Prostate gland (tissue), 2 donors: ENCODE measurements at regions of chrX and their contacts with region 1.

Region 1: GRCh38 chrX:15349046-15349445 is 13.7 kb upstream of the PIGA start:
- DNase-seq: peak; percentile 63
- H3K4me3 ChIP-seq: no peak overlapping the region
- H3K27ac ChIP-seq: no peak overlapping the region
- H3K4me1 ChIP-seq: no peaks in the 10 kb centered on the region
- H3K27me3 ChIP-seq: no peaks in the 10 kb centered on the region
- CTCF ChIP-seq: peak in 3 of 4 experiments; percentile 34 to 67 (median 48)
- POLR2A ChIP-seq: no peak

Region 2: DNA sequence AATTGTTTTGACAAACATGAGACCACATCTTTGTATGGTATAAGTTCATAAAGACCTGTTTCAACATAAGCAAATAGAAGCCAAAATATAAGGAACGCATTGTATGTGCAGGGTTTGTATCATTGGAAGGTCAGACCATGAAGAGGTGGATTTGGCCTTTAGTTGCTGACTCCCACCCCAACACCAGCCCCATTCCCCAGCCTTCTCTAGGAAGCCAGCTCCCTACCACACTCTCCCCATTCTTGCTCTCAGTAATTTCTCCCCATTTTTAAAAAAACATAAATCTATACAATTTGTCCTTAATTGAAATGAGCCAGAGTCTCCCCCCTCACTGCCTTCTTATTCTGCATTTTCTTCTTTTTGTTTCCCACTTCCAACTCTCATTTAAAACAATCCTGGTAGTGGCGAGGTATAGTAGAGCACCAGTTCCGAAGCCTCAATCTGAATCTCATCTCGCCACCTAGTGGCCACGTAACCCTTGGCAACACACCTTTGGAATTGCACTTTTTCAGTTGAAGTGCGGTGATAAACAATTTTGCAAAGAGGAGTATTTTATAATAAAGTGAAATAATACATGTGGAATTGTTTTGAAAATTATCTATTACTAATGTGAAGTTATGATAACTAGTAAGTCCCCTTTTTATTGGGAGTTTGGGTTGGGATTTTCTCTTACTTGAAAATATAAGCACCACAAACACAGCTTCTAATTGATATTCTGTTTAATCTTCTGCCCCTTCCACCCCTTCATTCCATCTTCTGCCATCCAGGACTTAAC is 205.8 kb before region 1 on chrX:
- intact Hi-C with region 1: no loop called
- DNase-seq: peak; percentile 21
- H3K4me3 ChIP-seq: no peak overlapping the region
- H3K27ac ChIP-seq: no peak overlapping the region
- H3K4me1 ChIP-seq: no peaks in the 10 kb centered on the region
- H3K27me3 ChIP-seq: no peaks in the 10 kb centered on the region
- CTCF ChIP-seq: peak; percentile 35 to 60 (median 48)
- POLR2A ChIP-seq: no peak

Region 3: GRCh38 chrX:15471016-15471415 is 122.0 kb after region 1 on chrX:
- intact Hi-C with region 1: loop called (anchors 2 kb)
- DNase-seq: peak; percentile 44
- H3K4me3 ChIP-seq: no peak overlapping the region
- H3K27ac ChIP-seq: no peak overlapping the region
- H3K4me1 ChIP-seq: no peaks in the 10 kb centered on the region
- H3K27me3 ChIP-seq: no peaks in the 10 kb centered on the region
- CTCF ChIP-seq: peak in 3 of 4 experiments; percentile 29 to 67 (median 53)
- POLR2A ChIP-seq: no peak